ENCODE measurements at regions of chr1 and their contacts with region 1.

Region 1: GRCh38 chr1:107782217-107782845 is 182.6 kb downstream of the VAV3 start:
- DNase-seq: no peak
- ATAC-seq: peak; percentile 70
- H3K4me3 ChIP-seq: no peak overlapping the region
- H3K27ac ChIP-seq: no peak overlapping the region
- H3K4me1 ChIP-seq: no peaks in the 10 kb centered on the region
- H3K27me3 ChIP-seq: no peaks in the 10 kb centered on the region

Region 2: GRCh38 chr1:107727882-107728281 is 54.4 kb before region 1 on chr1:
- intact Hi-C with region 1: no loop called
- DNase-seq: no peak
- ATAC-seq: no peak
- H3K4me3 ChIP-seq: no peak overlapping the region
- H3K27ac ChIP-seq: no peak overlapping the region
- H3K4me1 ChIP-seq: no peaks in the 10 kb centered on the region
- H3K27me3 ChIP-seq: peaks cover 0 to 1% of the 10 kb centered on the region in 2 donors

Region 3: GRCh38 chr1:108125312-108126138 is 343.2 kb after region 1 on chr1:
- intact Hi-C with region 1: loop called (anchors 2 kb)
- DNase-seq: peak in 1 of 2 donors; percentile 72
- ATAC-seq: peak; percentile 90
- H3K4me3 ChIP-seq: no peak overlapping the region
- H3K27ac ChIP-seq: no peak overlapping the region
- H3K4me1 ChIP-seq: no peaks in the 10 kb centered on the region
- H3K27me3 ChIP-seq: no peaks in the 10 kb centered on the region

Measured in aorta (tissue), 5 donors.